Transverse colon (tissue), 4 donors: ENCODE measurements at regions of chr4 and their contacts with region 1.

Region 1: DNA sequence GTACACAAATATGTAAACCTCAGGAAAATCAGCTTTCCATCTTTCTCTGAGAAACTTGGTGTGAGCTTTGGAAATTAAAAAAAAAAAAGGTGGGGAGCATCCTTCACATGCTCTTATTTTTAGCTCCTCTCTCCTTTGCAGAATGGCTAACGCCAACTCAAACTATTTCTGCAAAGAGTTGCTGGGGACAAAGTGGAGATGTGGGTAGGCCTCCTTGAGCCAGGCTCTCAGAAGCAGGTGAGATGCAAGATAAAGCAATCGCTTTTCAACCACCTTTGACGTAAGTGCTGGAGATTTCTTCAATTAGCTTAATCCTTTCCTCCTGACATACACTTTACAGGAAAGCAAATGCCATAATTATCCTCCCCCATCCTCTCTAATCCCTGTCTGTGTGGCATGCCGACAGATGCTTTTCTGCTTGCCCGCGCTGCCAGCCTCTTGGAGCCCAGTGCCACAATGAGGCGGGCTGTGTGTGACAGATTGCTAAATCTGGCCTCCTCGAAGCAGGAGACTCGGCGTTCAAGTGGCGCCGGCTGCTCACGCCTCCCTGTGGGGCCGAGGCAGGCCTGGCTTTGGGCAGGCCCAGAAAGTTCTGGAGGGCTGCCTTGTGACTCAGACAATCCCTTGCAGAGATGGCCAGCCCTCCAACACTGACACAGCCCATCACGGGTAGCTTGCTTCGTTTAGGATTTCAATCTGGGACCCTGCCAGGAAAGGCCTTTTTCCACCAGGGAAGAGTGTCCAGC is 64.9 kb upstream of the SOD3 start:
- DNase-seq: peak; percentile 18
- H3K4me3 ChIP-seq: no peak overlapping the region
- H3K27ac ChIP-seq: no peak overlapping the region
- H3K4me1 ChIP-seq: no peaks in the 10 kb centered on the region
- H3K27me3 ChIP-seq: no peaks in the 10 kb centered on the region
- CTCF ChIP-seq: no peak
- EP300 ChIP-seq: no peak
- POLR2A ChIP-seq: no peak

Region 2: GRCh38 chr4:23348789-23349498 is 1381.5 kb before region 1 on chr4:
- in situ Hi-C with region 1: no loop called
- intact Hi-C with region 1: loop called (anchors 5 kb)
- DNase-seq: no peak
- H3K4me3 ChIP-seq: no peak overlapping the region
- H3K27ac ChIP-seq: no peak overlapping the region
- H3K4me1 ChIP-seq: no peaks in the 10 kb centered on the region
- H3K27me3 ChIP-seq: no peaks in the 10 kb centered on the region
- CTCF ChIP-seq: no peak
- EP300 ChIP-seq: no peak
- POLR2A ChIP-seq: no peak

Region 3: DNA sequence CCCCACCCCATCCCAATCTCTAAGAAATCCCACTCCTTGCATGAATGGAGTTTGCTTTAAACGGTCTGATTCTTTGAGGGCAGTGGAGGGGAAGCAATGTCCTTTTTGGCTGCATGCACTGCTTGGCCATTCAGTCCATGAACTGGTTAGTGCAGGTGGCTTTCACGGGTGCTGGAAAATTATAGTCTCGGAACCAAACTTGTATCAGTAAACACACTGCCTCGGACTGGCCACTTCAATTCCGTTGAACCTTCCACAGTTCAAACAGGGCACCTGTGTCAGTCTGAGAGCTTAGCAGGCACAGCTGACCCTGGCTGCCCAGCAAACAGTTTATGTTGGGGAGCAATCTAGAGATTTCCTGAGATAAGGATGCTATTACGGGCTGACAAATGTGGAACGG is 401.7 kb before region 1 on chr4:
- in situ Hi-C with region 1: no loop called
- intact Hi-C with region 1: loop called (anchors 5 kb)
- DNase-seq: no peak
- H3K4me3 ChIP-seq: no peak overlapping the region
- H3K27ac ChIP-seq: no peak overlapping the region
- H3K4me1 ChIP-seq: no peaks in the 10 kb centered on the region
- H3K27me3 ChIP-seq: no peaks in the 10 kb centered on the region
- CTCF ChIP-seq: no peak
- EP300 ChIP-seq: no peak
- POLR2A ChIP-seq: no peak